ENCODE measurements at regions of chr1 and their contacts with region 1.

Region 1: DNA sequence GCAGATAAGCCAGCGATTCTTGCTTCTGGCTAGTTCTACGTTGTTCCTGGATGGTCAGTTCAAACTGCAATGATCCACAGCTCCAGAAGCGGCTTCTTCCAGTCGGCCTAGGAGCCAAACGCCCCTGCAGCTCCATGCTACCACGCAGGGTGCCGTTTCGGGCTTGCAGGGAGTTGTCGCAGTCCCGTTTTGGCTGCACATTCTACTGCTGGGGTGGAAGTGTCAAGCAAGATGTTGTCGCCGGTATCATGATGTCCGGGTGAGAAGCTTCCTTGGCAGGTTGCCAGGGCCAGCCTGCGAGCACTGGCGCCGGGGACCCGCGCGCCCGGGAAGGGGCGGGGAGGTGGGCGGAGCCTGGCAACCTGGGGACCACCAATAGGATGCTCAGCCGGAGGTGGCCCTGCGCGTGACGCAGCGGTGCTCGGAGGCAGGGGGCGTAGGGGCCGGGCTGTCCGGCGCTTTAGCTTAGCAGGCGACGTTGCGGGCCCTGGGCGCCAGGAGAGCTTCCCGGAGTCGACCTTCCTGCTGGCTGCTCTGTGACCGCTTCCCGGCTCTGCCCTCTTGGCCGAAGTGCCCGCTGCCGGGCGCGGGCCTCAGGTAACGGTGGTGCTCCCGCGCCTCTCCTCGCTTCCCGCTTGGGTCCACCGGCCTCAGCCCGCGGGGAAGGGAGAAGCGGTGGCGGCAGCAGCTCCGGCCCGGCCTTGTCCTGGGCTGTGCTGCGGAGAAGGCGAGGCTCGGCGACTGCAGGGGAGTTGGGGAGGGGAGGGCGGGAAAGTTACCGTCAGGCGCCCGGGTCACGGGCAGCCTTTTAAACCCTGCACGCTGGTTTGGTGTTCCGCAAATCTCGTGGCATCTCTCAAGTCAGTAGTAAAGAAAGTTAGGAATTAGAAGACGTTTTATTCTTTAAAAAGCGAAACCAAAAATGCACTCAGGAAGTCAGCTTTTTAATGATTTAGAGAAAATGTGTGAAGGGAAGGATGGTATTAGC is at the start of gene SOAT1:
- DNase-seq: peak; percentile 96
- ATAC-seq: peak; percentile 95
- H3K4me3 Mint-ChIP-seq: peak within 1 kb of the TSS; percentile 77
- H3K27ac Mint-ChIP-seq: peak within 1 kb of the TSS; percentile 91
- H3K4me1 Mint-ChIP-seq: peaks cover 40% of the 10 kb centered on the region
- H3K27me3 Mint-ChIP-seq: no peaks in the 10 kb centered on the region
- total RNA-seq, gene SOAT1: 49.8 to 52.0 TPM

Region 2: GRCh38 chr1:179034720-179035119 is 258.9 kb before region 1 on chr1:
- CTCF ChIA-PET with region 1: no interaction called
- POLR2A ChIA-PET with region 1: interaction called, 8 read pairs
- intact Hi-C with region 1: loop called in 1 of 2 experiments (anchors 2 kb)
- DNase-seq: no peak
- ATAC-seq: peak; percentile 80
- H3K4me3 Mint-ChIP-seq: no peak overlapping the region
- H3K27ac Mint-ChIP-seq: peak overlapping the region; percentile 84
- H3K4me1 Mint-ChIP-seq: peaks cover 85% of the 10 kb centered on the region
- H3K27me3 Mint-ChIP-seq: no peaks in the 10 kb centered on the region

Region 3: DNA sequence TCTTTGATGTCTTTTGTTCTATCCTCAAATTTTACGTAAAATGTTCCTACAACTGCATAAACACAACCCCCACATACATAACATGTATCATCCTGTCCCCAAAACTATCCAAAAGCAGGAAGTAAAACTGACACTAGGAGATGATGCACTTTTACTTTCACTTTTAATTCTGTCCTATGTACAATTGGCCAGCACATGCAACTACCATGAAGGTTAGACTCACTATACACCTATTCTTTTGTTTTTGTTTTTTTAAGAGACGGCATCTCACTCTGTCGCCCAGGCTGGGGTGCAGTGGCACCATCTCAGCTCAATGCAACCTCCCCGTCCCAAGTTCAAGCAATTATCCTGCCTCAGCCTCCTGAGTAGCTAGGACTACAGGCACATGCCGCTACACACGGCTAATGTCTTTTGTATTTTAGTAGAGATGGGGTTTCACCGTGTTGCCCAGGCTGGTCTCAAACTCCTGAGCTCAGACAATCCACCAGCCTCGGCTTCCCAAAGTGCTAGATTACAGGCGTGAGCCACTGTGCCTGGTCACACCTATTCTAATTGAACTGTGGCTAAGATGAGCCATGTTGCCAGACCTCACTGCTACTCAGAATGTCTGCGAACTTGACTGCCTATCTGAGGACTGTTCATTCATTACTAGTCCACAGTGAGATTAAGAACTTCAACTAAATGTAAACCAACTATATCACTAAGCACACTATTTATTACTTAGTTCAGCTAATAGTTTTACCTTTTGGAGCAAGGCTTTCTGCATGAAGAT is 163.7 kb before region 1 on chr1:
- CTCF ChIA-PET with region 1: interaction called, 3 read pairs
- POLR2A ChIA-PET with region 1: no interaction called
- intact Hi-C with region 1: loop called in 1 of 2 experiments (anchors 2 kb)
- DNase-seq: peak; percentile 31
- ATAC-seq: peak; percentile 97
- H3K4me3 Mint-ChIP-seq: peak overlapping the region; percentile 61
- H3K27ac Mint-ChIP-seq: peak overlapping the region; percentile 92
- H3K4me1 Mint-ChIP-seq: peaks cover 39% of the 10 kb centered on the region
- H3K27me3 Mint-ChIP-seq: no peaks in the 10 kb centered on the region

Region 4: DNA sequence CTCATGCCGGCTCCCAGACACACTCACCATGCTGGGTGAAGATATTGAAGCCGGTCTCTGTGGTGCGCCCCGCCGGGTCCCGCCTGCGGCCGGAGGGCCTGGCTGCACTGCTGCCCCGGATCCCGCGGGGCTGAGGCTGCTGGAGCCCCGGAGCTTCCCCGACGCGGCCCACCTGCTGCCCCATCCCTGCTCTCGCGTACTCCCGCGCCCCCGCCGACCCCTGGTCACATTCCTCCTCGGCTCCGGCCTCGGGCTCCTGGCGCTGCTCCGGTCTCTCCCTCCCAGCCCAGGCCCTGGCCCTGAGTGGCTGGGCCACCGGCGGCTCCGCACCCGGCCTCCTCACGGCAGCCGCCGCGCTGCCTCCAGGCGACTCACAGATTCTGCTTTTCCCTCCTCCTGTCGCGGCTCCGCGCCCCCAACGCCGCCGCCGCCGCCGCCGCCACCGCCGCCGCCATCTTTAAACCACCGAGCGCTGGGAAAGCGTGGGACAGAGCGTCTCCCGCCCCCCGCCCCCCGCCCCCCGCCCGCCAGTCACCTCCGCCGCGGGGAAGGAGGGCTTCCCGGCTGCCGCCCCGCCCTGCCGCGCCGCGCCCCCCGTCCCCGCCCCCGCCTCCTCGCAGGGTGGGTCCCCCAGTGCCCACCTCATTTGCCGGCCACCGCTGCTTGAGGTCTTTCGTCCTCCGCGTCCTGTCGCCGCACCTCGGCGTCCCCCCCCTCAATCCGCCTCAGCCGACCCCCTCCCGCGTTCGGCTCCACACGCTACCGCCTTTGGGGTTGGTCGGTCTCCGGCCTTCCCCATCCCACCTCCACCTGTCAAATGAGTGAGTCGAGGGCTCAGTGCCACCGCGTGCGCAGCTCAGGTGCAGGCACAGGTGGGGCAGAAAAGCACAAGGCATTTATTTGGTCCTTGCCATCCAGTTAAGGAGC is 64.2 kb before region 1 on chr1 and contains the start of gene ABL2:
- CTCF ChIA-PET with region 1: interaction called, 4 read pairs
- POLR2A ChIA-PET with region 1: interaction called, 3 read pairs
- intact Hi-C with region 1: loop called (anchors 1 to 2 kb)
- DNase-seq: peak; percentile 71
- ATAC-seq: peak; percentile 21
- H3K4me3 Mint-ChIP-seq: peak within 1 kb of the TSS; percentile 86
- H3K27ac Mint-ChIP-seq: peak within 1 kb of the TSS; percentile 88
- H3K4me1 Mint-ChIP-seq: peaks cover 36% of the 10 kb centered on the region
- H3K27me3 Mint-ChIP-seq: no peaks in the 10 kb centered on the region
- total RNA-seq, gene ABL2: 6.6 to 8.4 TPM

Region 5: DNA sequence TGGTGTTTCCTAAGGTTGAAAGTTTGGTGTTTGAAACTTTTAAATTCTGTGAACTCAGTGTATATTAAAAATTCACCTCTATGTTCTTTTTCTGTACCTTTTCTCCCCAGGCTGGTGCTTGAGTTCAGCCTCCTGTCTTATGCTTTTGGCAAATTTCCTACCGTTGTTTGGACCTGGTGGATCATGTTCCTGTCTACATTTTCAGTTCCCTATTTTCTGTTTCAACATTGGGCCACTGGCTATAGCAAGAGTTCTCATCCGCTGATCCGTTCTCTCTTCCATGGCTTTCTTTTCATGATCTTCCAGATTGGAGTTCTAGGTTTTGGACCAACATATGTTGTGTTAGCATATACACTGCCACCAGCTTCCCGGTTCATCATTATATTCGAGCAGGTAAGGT is 47.3 kb after region 1 on chr1:
- CTCF ChIA-PET with region 1: no interaction called
- POLR2A ChIA-PET with region 1: no interaction called
- intact Hi-C with region 1: no loop called
- DNase-seq: no peak
- ATAC-seq: no peak
- H3K4me3 Mint-ChIP-seq: no peak overlapping the region
- H3K27ac Mint-ChIP-seq: no peak overlapping the region
- H3K4me1 Mint-ChIP-seq: no peaks in the 10 kb centered on the region
- H3K27me3 Mint-ChIP-seq: no peaks in the 10 kb centered on the region

Region 6: DNA sequence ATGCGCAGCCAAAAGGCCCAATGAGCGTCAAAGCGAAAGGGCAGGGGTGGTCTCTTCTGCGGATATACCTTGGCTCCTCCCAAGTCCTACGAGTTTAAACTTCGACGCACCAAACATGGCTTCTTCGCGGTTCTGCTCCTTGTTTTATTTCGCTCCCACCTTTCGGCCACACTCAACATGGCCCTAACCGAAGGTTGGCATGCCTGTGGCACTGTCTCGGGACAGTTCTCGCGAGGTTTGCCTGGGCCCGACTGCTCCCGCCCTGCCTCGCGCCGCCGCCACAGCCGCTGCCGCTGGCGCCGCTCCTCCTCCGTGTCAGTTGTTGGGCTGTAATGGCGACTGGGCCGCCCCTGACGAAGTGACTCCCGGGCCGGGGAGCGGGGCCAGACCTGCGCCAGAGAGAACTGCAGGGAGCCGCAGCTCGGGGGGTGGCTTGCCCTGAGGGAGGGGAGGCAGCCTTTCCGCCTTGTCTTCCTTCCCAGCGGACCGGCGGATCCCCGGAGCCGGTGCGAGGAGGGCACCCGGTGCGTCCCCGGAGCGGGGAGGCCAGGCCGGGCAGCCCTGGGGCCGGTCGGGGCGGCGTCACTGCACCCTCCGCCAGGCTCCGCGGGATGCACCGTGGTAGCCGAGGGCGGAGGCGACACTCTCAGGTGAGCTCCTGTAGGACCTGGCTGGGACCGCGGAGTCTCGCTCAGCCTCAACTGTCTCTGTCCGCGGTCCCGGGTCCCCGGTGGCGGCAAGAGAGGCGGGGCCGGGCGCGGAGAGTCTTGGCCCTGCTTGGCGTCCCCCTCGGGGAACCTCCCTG is 661.1 kb after region 1 on chr1 and contains the start of gene CEP350:
- CTCF ChIA-PET with region 1: no interaction called
- POLR2A ChIA-PET with region 1: no interaction called
- intact Hi-C with region 1: loop called in 1 of 2 experiments (anchors 2 kb)
- DNase-seq: peak; percentile 99
- ATAC-seq: peak; percentile 94
- H3K4me3 Mint-ChIP-seq: peak within 1 kb of the TSS; percentile 82
- H3K27ac Mint-ChIP-seq: peak within 1 kb of the TSS; percentile 98
- H3K4me1 Mint-ChIP-seq: peaks cover 47% of the 10 kb centered on the region
- H3K27me3 Mint-ChIP-seq: no peaks in the 10 kb centered on the region
- total RNA-seq, gene CEP350: 38.2 to 42.1 TPM